OCI-LY7 (cell line): ENCODE measurements at regions of chr1 and their contacts with region 1.

Region 1: GRCh38 chr1:26602378-26602959 is 72.9 kb downstream of the RPS6KA1 start:
- DNase-seq: peak; percentile 77
- H3K4me3 ChIP-seq: no peak overlapping the region
- H3K27ac ChIP-seq: no peak overlapping the region
- H3K4me1 ChIP-seq: peaks cover 5% of the 10 kb centered on the region
- CTCF ChIP-seq: peak; percentile 98

Region 2: GRCh38 chr1:26666855-26667254 is 64.4 kb after region 1 on chr1:
- CTCF ChIA-PET with region 1: no interaction called
- POLR2A ChIA-PET with region 1: no interaction called
- intact Hi-C with region 1: no loop called
- DNase-seq: no peak
- H3K4me3 ChIP-seq: no peak overlapping the region
- H3K27ac ChIP-seq: no peak overlapping the region
- H3K4me1 ChIP-seq: no peaks in the 10 kb centered on the region
- CTCF ChIP-seq: no peak

Region 3: DNA sequence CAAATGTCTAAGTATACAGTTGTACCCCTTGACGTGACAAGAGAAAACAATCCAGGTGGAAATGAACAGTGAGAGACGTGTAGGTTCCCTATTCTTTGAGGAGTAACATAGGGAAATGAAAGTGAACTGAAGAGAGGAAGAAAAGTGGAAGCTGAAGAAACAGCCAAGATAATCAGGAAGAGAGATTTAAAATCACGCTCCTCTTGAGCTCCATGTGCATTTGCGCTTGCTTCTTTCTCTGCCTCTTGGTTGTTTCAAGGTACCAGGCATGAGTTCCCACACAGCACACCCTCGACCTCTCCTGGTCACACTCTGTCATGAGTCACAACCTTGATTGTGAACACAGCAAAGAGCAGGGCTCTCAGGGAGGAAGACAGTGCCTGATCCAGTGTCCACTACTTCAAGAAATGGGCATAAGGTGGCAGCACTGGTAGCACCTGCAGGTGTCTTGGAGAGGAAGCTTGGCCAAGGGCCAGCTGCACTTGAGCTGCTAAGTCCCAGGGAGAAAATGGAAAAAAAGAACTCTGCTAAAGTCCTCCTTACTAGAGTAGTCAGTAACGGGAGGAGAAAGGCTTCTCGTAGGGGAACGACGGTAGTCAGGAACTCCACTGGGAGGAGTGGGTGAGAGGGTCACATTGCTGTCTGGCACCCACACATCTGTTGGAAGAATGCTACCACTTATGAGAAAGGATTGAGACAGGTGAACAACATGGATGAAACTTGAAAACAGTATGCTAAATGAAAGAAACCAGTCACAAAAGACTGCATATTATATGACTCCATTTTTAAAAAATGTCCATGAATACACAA is 75.0 kb after region 1 on chr1:
- CTCF ChIA-PET with region 1: interaction called, 7 read pairs
- POLR2A ChIA-PET with region 1: no interaction called
- intact Hi-C with region 1: loop called (anchors 1 kb)
- DNase-seq: peak; percentile 82
- H3K4me3 ChIP-seq: peak overlapping the region; percentile 3
- H3K27ac ChIP-seq: no peak overlapping the region
- H3K4me1 ChIP-seq: peaks cover 15% of the 10 kb centered on the region
- CTCF ChIP-seq: peak; percentile 84